B cell (primary cell): ENCODE measurements at regions of chr14 and their contacts with region 1.

Region 1: GRCh38 chr14:65412032-65412846 is at the start of gene FUT8:
- DNase-seq: peak; percentile 96
- ATAC-seq: peak; percentile 84
- H3K4me3 ChIP-seq: peak within 1 kb of the TSS; percentile 77 to 97 (median 95)
- H3K4me3 Mint-ChIP-seq: peak within 1 kb of the TSS; percentile 94
- H3K27ac ChIP-seq: peak within 1 kb of the TSS; percentile 81 to 82
- H3K27ac Mint-ChIP-seq: peak within 1 kb of the TSS; percentile 96
- H3K4me1 ChIP-seq: peaks cover 13 to 20% of the 10 kb centered on the region in 2 donors
- H3K4me1 Mint-ChIP-seq: peaks cover 43% of the 10 kb centered on the region
- H3K27me3 ChIP-seq: no peaks in the 10 kb centered on the region
- H3K27me3 Mint-ChIP-seq: no peaks in the 10 kb centered on the region
- CTCF ChIP-seq: peak; percentile 70
- total RNA-seq, gene FUT8: 91.8 and 94.6 TPM in 2 replicates

Region 2: GRCh38 chr14:64387694-64388532 is 1024.3 kb before region 1 on chr14 and contains the start of gene MTHFD1:
- CTCF ChIA-PET with region 1: no interaction called
- POLR2A ChIA-PET with region 1: no interaction called
- intact Hi-C with region 1: loop called (anchors 5 kb)
- DNase-seq: peak; percentile 98
- ATAC-seq: peak; percentile 75
- H3K4me3 ChIP-seq: peak within 1 kb of the TSS; percentile 68 to 93 (median 84)
- H3K4me3 Mint-ChIP-seq: peak within 1 kb of the TSS; percentile 93
- H3K27ac ChIP-seq: peak within 1 kb of the TSS; percentile 75 to 80
- H3K27ac Mint-ChIP-seq: peak within 1 kb of the TSS; percentile 95
- H3K4me1 ChIP-seq: peaks cover 27 to 34% of the 10 kb centered on the region in 2 donors
- H3K4me1 Mint-ChIP-seq: peaks cover 42% of the 10 kb centered on the region
- H3K27me3 ChIP-seq: no peaks in the 10 kb centered on the region
- H3K27me3 Mint-ChIP-seq: no peaks in the 10 kb centered on the region
- CTCF ChIP-seq: no peak
- total RNA-seq, gene MTHFD1: 47.1 and 51.3 TPM in 2 replicates

Region 3: DNA sequence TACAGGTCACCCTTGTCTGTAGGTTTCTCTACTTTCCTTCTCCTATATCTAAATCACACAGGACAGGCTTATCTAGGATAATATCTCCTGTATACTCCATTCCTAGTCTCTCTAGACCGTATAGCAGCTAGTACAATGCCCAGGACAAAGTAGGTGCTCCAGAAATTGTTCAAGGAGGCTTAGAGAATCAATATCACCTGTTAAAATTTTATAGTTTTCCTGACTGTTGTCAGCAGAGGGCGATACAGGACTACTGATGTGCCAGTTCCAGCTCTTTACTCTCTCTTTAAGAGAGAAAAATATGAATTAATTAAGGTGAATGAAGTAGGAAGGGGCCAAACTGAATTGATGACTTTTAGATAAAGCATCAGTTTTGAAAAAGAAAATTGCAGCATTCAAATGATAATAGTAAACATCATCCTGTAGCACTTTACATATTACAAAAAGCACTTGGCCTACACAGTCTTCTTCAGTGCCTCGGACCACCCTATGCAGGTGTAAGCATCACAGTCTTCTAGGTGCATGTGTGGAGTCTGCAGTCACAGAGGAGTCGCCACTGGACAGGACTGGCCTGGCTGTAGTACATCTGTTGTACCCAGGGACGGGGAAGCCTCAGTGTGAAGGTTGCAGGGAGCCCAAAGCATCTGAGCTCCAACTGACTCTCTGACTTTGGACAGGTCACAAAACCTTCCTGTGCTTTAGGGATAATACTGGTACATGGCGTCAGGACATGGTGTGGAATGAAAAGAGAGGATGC is 248.0 kb before region 1 on chr14:
- CTCF ChIA-PET with region 1: interaction called, 213 read pairs
- POLR2A ChIA-PET with region 1: interaction called, 8 read pairs
- intact Hi-C with region 1: loop called (anchors 1 kb)
- DNase-seq: peak; percentile 78
- ATAC-seq: peak; percentile 45
- H3K4me3 ChIP-seq: no peak overlapping the region
- H3K4me3 Mint-ChIP-seq: no peak overlapping the region
- H3K27ac ChIP-seq: no peak overlapping the region
- H3K27ac Mint-ChIP-seq: no peak overlapping the region
- H3K4me1 ChIP-seq: peaks cover 17 to 32% of the 10 kb centered on the region in 2 donors
- H3K4me1 Mint-ChIP-seq: peaks cover 54% of the 10 kb centered on the region
- H3K27me3 ChIP-seq: no peaks in the 10 kb centered on the region
- H3K27me3 Mint-ChIP-seq: no peaks in the 10 kb centered on the region
- CTCF ChIP-seq: peak; percentile 91

Region 4: DNA sequence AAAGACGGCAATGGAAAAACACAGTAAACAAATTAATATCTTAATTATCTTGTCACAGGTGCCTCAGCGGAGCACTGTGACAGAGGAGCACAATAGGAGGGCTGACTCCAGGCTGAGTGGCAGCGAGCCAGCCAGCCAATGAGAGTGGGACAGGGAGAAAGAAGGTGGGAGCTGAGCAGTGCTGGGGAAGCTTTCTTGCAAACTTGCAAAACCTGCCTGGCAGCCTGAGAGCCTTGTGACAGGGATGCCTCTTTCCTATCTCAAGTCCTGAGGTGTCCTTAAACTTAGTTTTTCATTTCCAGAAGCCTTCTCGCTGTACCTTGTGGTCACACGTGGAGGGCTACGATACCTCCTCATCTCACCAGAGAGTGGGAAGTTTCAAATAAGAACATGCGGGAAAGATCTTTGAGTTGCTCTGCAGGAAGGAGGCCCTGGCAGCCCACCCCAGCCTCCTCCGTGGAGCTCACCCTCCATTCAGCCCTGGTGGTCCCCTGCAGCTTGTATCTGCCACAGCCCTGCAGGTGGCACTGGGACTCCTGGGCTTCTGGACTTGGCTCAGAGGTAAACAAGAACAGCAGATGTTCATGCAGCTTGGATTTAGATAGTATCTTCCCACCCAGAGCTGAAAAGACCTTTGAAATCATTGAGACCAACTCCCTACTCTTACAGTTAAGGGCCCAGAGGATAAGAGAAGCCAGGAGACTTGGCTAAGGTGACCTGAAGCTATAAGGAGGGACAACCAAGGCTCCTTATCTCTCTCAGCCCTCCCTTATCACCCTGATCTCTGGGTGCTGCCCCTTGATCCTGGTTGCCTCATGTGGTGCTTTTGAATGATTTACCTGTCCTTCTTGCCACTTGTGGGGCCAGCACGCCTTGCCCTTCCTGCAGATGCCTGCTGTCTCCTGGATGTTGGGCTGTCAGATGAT is 156.4 kb before region 1 on chr14:
- CTCF ChIA-PET with region 1: interaction called, 16 read pairs
- POLR2A ChIA-PET with region 1: no interaction called
- intact Hi-C with region 1: no loop called
- DNase-seq: peak; percentile 34
- ATAC-seq: peak; percentile 53
- H3K4me3 ChIP-seq: no peak overlapping the region
- H3K4me3 Mint-ChIP-seq: no peak overlapping the region
- H3K27ac ChIP-seq: no peak overlapping the region
- H3K27ac Mint-ChIP-seq: no peak overlapping the region
- H3K4me1 ChIP-seq: peaks cover 16 to 18% of the 10 kb centered on the region in 2 donors
- H3K4me1 Mint-ChIP-seq: peaks cover 35% of the 10 kb centered on the region
- H3K27me3 ChIP-seq: no peaks in the 10 kb centered on the region
- H3K27me3 Mint-ChIP-seq: no peaks in the 10 kb centered on the region
- CTCF ChIP-seq: no peak

Region 5: DNA sequence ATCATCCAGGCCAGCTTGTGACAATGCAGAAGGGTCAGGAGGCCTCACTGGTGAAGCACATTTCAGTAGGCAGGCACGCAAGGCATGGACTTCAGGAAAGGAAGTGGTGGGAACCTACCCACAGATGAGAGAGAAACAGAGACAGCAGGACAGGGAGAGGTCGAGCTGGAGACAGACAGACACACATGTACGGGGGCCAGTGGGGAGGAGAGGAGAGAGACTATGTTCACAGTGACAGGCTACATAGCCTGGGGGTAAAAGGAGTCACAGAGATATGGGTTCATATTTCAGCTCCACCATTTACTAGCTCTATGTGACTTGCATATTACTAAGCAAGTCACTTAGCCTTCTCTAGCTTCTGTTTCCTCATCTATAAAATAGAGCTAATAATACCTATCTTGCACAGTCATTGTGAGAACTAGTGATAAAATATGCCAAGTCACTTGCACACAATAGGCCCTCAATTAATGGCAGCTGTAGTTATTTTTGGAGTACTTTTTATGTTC is 90.8 kb before region 1 on chr14:
- CTCF ChIA-PET with region 1: interaction called, 32 read pairs
- POLR2A ChIA-PET with region 1: interaction called, 69 read pairs
- intact Hi-C with region 1: loop called (anchors 1 kb)
- DNase-seq: no peak
- ATAC-seq: no peak
- H3K4me3 ChIP-seq: peak overlapping the region in 1 of 5 experiments; percentile 0
- H3K4me3 Mint-ChIP-seq: peak overlapping the region; percentile 3
- H3K27ac ChIP-seq: peak overlapping the region; percentile 39 to 45
- H3K27ac Mint-ChIP-seq: peak overlapping the region; percentile 26
- H3K4me1 ChIP-seq: peaks cover 64 to 72% of the 10 kb centered on the region in 2 donors
- H3K4me1 Mint-ChIP-seq: peaks cover 75% of the 10 kb centered on the region
- H3K27me3 ChIP-seq: no peaks in the 10 kb centered on the region
- H3K27me3 Mint-ChIP-seq: no peaks in the 10 kb centered on the region
- CTCF ChIP-seq: no peak

Region 6: GRCh38 chr14:65369268-65369959 is 42.8 kb before region 1 on chr14:
- CTCF ChIA-PET with region 1: no interaction called
- POLR2A ChIA-PET with region 1: no interaction called
- intact Hi-C with region 1: no loop called
- DNase-seq: no peak
- ATAC-seq: no peak
- H3K4me3 ChIP-seq: no peak overlapping the region
- H3K4me3 Mint-ChIP-seq: no peak overlapping the region
- H3K27ac ChIP-seq: no peak overlapping the region
- H3K27ac Mint-ChIP-seq: no peak overlapping the region
- H3K4me1 ChIP-seq: peaks cover 7 to 21% of the 10 kb centered on the region in 2 donors
- H3K4me1 Mint-ChIP-seq: peaks cover 26% of the 10 kb centered on the region
- H3K27me3 ChIP-seq: no peaks in the 10 kb centered on the region
- H3K27me3 Mint-ChIP-seq: no peaks in the 10 kb centered on the region
- CTCF ChIP-seq: no peak

Region 7: GRCh38 chr14:65434214-65434850 is 22.1 kb after region 1 on chr14:
- CTCF ChIA-PET with region 1: interaction called, 12 read pairs
- POLR2A ChIA-PET with region 1: no interaction called
- intact Hi-C with region 1: no loop called
- DNase-seq: no peak
- ATAC-seq: no peak
- H3K4me3 ChIP-seq: no peak overlapping the region
- H3K4me3 Mint-ChIP-seq: no peak overlapping the region
- H3K27ac ChIP-seq: peak overlapping the region; percentile 13 to 17
- H3K27ac Mint-ChIP-seq: peak overlapping the region; percentile 54
- H3K4me1 ChIP-seq: peaks cover 25 to 37% of the 10 kb centered on the region in 2 donors
- H3K4me1 Mint-ChIP-seq: peaks cover 57% of the 10 kb centered on the region
- H3K27me3 ChIP-seq: no peaks in the 10 kb centered on the region
- H3K27me3 Mint-ChIP-seq: no peaks in the 10 kb centered on the region
- CTCF ChIP-seq: no peak

Region 8: GRCh38 chr14:65565948-65566347 is 153.7 kb after region 1 on chr14:
- CTCF ChIA-PET with region 1: no interaction called
- POLR2A ChIA-PET with region 1: no interaction called
- intact Hi-C with region 1: no loop called
- DNase-seq: no peak
- ATAC-seq: no peak
- H3K4me3 ChIP-seq: no peak overlapping the region
- H3K4me3 Mint-ChIP-seq: no peak overlapping the region
- H3K27ac ChIP-seq: no peak overlapping the region
- H3K27ac Mint-ChIP-seq: no peak overlapping the region
- H3K4me1 ChIP-seq: peaks cover 0 to 7% of the 10 kb centered on the region in 2 donors
- H3K4me1 Mint-ChIP-seq: peaks cover 33% of the 10 kb centered on the region
- H3K27me3 ChIP-seq: no peaks in the 10 kb centered on the region
- H3K27me3 Mint-ChIP-seq: no peaks in the 10 kb centered on the region
- CTCF ChIP-seq: no peak

Region 9: GRCh38 chr14:65958664-65959562 is 546.7 kb after region 1 on chr14:
- CTCF ChIA-PET with region 1: interaction called, 120 read pairs
- POLR2A ChIA-PET with region 1: no interaction called
- intact Hi-C with region 1: no loop called
- DNase-seq: peak; percentile 60
- ATAC-seq: peak; percentile 41
- H3K4me3 ChIP-seq: no peak overlapping the region
- H3K4me3 Mint-ChIP-seq: no peak overlapping the region
- H3K27ac ChIP-seq: no peak overlapping the region
- H3K27ac Mint-ChIP-seq: no peak overlapping the region
- H3K4me1 ChIP-seq: no peaks in the 10 kb centered on the region
- H3K4me1 Mint-ChIP-seq: no peaks in the 10 kb centered on the region
- H3K27me3 ChIP-seq: peaks cover 0 to 15% (median 7%) of the 10 kb centered on the region in 4 experiments
- H3K27me3 Mint-ChIP-seq: peaks cover 30% of the 10 kb centered on the region
- CTCF ChIP-seq: peak; percentile 74